ENCODE measurements at regions of chr1 and their contacts with region 1.

Region 1: DNA sequence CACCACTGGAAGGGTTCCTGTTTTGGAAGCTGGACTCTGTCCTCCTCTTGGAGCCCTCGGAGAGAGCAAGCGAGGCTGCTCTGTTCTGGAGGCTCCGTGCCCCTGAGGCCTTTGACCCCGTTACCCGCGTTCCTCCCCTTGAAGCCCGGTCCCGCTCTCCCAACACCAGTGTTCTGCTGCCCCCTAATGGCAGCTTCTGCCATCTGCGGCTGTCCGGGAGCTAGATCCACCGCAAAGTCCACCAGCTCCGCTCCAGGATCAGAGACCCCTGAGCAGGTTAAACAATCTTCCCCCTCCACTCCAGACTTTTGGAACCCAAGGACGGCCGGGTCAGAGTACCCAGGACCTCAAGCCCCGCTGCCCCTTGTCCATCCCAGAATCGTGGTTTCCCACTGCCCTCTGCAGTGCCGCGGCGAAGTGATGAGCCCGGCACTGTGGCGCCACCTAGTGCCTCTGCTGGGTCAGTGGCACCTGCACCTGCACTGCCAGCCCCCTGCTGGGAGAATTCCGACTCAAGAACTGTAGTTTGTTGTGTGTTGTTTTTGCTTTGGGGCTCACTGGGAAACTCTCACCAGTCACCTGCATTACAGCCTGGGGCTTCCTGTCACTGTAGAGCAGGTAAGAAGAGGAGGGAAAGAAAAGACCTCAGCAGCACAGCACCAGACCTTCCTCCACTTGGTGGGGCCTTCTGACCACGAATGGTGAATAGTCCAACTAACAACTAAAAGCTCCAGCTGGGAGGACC is 63.5 kb upstream of the NFASC start:
- DNase-seq: peak; percentile 90
- H3K4me3 Mint-ChIP-seq: peak overlapping the region; percentile 78
- H3K27ac Mint-ChIP-seq: peak overlapping the region; percentile 38
- H3K4me1 Mint-ChIP-seq: no peaks in the 10 kb centered on the region
- H3K27me3 Mint-ChIP-seq: no peaks in the 10 kb centered on the region

Region 2: DNA sequence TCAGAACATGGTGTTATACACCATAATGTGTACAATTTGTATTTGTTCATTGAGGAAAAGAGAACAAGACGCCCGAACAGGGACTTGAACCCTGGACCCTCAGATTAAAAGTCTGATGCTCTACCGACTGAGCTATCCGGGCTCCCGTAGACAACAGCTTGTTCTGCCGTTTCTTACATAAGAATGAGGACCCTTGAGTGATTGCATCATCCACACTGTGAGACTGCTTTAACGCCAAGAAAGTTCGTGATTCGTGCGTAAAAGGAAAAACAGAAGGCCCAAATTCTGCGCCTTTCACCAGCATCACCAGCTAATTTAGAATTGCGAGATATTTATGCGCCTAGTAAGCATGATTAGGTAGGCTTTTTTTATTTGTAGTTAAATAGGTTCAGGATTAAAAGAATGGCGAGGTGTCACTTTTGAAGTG is 300.1 kb before region 1 on chr1:
- CTCF ChIA-PET with region 1: interaction called, 31 read pairs
- POLR2A ChIA-PET with region 1: no interaction called
- intact Hi-C with region 1: loop called (anchors 2 kb)
- DNase-seq: peak; percentile 93
- H3K4me3 Mint-ChIP-seq: peak overlapping the region; percentile 91
- H3K27ac Mint-ChIP-seq: peak overlapping the region; percentile 98
- H3K4me1 Mint-ChIP-seq: peaks cover 24% of the 10 kb centered on the region
- H3K27me3 Mint-ChIP-seq: peaks cover 4% of the 10 kb centered on the region

Region 3: DNA sequence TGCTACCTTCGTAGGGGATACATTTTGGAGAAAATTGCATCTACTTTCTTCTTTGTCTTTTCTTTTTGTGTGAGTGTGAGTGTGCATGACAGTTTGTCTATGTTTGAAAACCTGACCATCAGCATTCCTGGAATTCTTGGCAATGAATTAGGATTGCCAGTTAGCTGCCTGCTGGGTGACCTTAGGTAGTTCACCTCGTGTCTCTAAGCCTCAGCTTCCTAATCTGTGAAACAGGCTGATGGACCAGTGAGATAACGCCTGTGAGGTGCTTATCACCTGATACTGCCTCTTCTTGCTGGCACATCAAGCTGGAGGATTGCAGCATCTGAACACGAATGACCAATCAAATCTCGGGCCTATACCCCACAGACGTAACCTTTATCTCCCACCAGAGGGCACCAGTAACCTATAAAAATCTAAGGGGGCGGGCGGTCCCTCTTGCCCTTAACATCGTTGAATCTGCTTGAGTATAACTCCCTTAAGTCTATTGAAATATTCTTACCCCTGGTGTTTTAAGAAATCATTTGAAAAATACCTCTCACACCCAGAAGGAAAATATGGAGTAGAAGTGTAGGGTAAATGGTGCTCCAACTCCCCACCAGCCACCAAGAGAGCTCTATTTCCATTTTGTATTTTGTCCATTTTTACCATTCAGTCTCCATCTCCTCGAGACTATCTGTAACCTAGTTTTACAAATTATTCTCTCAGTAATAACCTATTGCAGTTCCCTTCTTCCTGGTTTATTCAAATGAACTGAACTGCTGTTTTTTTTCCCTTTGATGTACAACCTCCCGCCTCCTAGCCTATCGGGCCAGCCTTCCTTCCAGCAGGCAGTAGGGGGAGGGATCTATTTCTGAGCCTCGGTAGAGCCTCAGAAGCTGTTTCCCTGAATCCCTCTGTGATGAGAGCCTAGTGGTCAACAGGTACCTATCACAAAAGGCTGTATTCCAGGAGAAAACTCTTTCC is 241.2 kb before region 1 on chr1:
- CTCF ChIA-PET with region 1: interaction called, 149 read pairs
- POLR2A ChIA-PET with region 1: interaction called, 4 read pairs
- intact Hi-C with region 1: loop called (anchors 1 kb)
- DNase-seq: peak; percentile 70
- H3K4me3 Mint-ChIP-seq: no peak overlapping the region
- H3K27ac Mint-ChIP-seq: peak overlapping the region; percentile 73
- H3K4me1 Mint-ChIP-seq: peaks cover 46% of the 10 kb centered on the region
- H3K27me3 Mint-ChIP-seq: no peaks in the 10 kb centered on the region

Region 4: GRCh38 chr1:204692325-204692840 is 114.7 kb before region 1 on chr1:
- CTCF ChIA-PET with region 1: interaction called, 17 read pairs
- POLR2A ChIA-PET with region 1: no interaction called
- intact Hi-C with region 1: no loop called
- DNase-seq: no peak
- H3K4me3 Mint-ChIP-seq: no peak overlapping the region
- H3K27ac Mint-ChIP-seq: no peak overlapping the region
- H3K4me1 Mint-ChIP-seq: peaks cover 5% of the 10 kb centered on the region
- H3K27me3 Mint-ChIP-seq: peaks cover 21% of the 10 kb centered on the region

Region 5: GRCh38 chr1:204791453-204792353 is 15.4 kb before region 1 on chr1:
- CTCF ChIA-PET with region 1: interaction called, 152 read pairs
- POLR2A ChIA-PET with region 1: no interaction called
- intact Hi-C with region 1: loop called (anchors 1 kb)
- DNase-seq: peak; percentile 86
- H3K4me3 Mint-ChIP-seq: no peak overlapping the region
- H3K27ac Mint-ChIP-seq: no peak overlapping the region
- H3K4me1 Mint-ChIP-seq: no peaks in the 10 kb centered on the region
- H3K27me3 Mint-ChIP-seq: peaks cover 23% of the 10 kb centered on the region

Region 6: DNA sequence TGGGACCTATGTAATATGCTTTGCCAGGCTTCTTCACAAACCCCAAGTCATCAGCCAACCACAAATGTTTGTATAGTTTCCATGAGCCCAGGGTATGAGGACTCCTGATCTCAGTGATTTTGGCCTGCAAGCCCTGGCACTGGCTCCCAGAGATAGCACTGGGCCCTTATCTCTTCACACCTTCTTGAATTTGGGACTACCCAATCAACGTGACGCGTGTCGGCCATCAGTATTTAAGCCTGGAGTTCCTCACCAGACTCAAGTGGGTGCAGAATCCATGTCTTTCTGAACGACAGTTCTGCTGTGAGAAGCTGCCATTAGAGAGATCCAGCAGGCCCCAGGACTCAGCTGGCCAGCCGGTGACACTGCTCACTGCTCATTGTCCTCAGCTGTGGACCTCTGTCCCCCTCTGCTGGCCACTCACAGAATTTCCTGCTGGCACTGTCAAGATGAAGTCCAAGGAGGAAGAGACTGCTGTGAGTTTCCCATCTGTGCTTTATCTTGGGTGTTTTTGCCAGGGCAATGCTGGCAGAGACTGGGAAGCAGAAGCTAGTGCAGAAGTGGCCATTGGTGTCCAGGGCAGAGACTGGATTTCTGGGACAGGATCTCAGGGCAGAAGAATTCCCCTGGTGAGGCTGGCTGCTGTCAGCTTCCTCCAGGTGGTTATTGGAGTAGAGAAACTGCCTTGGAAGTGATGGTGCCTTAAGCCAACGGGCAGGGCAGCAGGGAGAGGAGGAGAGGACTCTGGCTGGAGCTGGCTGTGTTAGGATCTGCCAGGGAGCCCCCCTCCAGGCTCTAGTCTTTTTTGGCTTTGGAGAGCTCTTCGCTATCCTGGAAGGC is 449.0 kb after region 1 on chr1:
- CTCF ChIA-PET with region 1: interaction called, 3 read pairs
- POLR2A ChIA-PET with region 1: no interaction called
- intact Hi-C with region 1: loop called (anchors 10 kb)
- DNase-seq: peak; percentile 92
- H3K4me3 Mint-ChIP-seq: no peak overlapping the region
- H3K27ac Mint-ChIP-seq: no peak overlapping the region
- H3K4me1 Mint-ChIP-seq: no peaks in the 10 kb centered on the region
- H3K27me3 Mint-ChIP-seq: peaks cover 4% of the 10 kb centered on the region

Measured in activated CD4-positive, alpha-beta memory T cell treated with anti-CD3 and anti-CD28 coated beads for 36 hours (primary cell).